ENCODE measurements at regions of chr2 and their contacts with region 1.

Region 1: GRCh38 chr2:15122915-15123314 is 438.2 kb downstream of the NBAS start:
- DNase-seq: no peak
- ATAC-seq: no peak
- H3K4me3 ChIP-seq: no peak overlapping the region
- H3K27ac ChIP-seq: no peak overlapping the region
- H3K4me1 ChIP-seq: no peaks in the 10 kb centered on the region
- H3K27me3 ChIP-seq: no peaks in the 10 kb centered on the region
- CTCF ChIP-seq: no peak

Region 2: GRCh38 chr2:14866756-14867356 is 256.1 kb before region 1 on chr2:
- CTCF ChIA-PET with region 1: no interaction called
- POLR2A ChIA-PET with region 1: interaction called, 14 read pairs
- in situ Hi-C with region 1: no loop called
- intact Hi-C with region 1: no loop called
- DNase-seq: no peak
- ATAC-seq: no peak
- H3K4me3 ChIP-seq: no peak overlapping the region
- H3K27ac ChIP-seq: no peak overlapping the region
- H3K4me1 ChIP-seq: no peaks in the 10 kb centered on the region
- H3K27me3 ChIP-seq: no peaks in the 10 kb centered on the region
- CTCF ChIP-seq: no peak

Region 3: DNA sequence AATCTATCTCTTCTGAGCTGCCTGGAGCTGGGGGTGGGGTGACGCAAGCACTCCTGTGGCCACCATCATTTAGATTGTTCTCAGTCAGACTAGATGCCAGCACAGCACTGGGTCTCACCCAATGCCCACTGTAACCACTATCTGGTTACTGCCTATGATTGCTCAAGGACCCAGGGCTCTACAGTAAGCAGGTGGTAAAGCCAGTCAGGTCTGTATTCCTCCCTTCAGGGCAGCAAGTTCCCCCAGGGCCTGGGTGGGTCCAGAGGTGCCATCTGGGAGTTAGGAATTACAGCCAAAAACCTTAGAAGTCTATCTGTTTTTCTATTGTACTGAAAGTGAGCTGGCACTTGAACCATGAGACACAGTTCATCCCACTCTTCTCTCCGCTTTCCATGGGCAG is 1875.5 kb after region 1 on chr2:
- CTCF ChIA-PET with region 1: no interaction called
- POLR2A ChIA-PET with region 1: no interaction called
- in situ Hi-C with region 1: no loop called
- intact Hi-C with region 1: no loop called
- DNase-seq: no peak
- ATAC-seq: no peak
- H3K4me3 ChIP-seq: no peak overlapping the region
- H3K27ac ChIP-seq: no peak overlapping the region
- H3K4me1 ChIP-seq: no peaks in the 10 kb centered on the region
- H3K27me3 ChIP-seq: no peaks in the 10 kb centered on the region
- CTCF ChIP-seq: no peak